Activated CD4-positive, alpha-beta memory T cell treated with anti-CD3 and anti-CD28 coated beads for 36 hours (primary cell): ENCODE measurements at regions of chr1 and their contacts with region 1.

Region 1: DNA sequence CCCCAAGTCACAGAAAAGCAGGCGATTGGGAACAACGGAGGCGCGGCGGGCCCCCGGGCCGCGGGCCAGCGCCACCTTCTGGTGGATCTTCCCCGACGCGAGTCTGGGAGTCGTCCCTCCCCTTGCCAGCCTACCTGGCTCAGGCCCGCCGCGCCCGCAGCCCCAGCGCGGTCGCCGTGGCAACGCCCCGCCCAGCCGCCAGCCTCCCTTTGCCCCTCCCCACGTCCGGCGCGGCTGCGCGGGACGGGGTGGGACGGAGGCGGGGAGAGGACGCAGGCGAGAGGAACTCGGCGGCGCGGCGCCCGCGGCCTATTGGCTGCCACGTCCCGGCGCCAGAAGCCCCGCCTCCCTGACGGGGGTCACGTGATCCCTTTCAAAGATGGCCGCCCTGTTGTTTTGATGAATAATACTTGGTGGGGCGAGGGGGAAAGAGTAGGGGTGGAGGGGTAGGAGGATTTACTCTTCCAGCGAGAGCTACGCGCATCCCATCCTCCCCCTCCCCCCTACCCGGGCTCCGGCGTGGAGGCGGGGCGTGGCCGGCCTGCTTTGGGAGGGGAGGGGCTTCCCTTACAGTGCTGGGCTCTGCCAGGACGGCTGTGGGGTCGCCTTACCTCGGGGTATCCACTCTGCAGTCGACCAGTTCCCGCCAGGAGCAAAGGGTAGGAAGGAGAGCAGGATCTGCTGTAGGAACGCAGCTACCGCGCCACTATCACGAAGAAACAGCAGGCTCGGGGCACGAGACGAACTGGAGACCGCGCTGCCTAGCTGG is at the start of gene UBE4B:
- DNase-seq: peak; percentile 99
- H3K4me3 Mint-ChIP-seq: peak within 1 kb of the TSS; percentile 95
- H3K27ac Mint-ChIP-seq: peak within 1 kb of the TSS; percentile 89
- H3K4me1 Mint-ChIP-seq: peaks cover 23% of the 10 kb centered on the region
- H3K27me3 Mint-ChIP-seq: no peaks in the 10 kb centered on the region
- total RNA-seq, gene UBE4B: 24.3 to 25.3 TPM

Region 2: DNA sequence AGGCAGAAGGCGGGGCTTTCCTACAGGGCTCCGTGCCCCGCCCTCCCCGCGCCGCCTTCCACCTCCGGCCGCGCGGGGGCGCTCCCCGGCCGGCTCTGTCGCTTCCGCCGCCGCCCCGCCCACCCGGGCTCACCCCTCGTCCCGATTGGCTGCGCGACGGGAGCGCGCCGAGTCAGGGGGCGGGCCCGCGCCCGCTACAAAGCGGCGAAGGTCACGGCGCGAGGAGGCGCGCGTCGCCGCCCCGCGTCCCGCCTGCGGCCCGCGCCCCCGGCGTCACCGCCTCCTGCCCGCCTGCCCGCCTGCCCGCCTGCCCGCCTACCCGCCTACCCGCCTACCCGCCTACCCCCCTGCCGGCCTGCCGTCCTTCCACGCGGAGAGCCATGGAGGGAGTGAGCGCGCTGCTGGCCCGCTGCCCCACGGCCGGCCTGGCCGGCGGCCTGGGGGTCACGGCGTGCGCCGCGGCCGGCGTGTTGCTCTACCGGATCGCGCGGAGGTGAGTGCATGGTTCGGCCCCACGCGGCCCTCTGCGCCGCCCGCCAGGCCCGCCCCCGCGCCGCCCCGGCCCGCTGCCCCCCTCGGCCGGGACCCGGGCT is 444.1 kb before region 1 on chr1 and contains the start of gene TMEM201:
- CTCF ChIA-PET with region 1: no interaction called
- POLR2A ChIA-PET with region 1: no interaction called
- intact Hi-C with region 1: loop called (anchors 1 kb)
- DNase-seq: peak; percentile 95
- H3K4me3 Mint-ChIP-seq: peak within 1 kb of the TSS; percentile 82
- H3K27ac Mint-ChIP-seq: peak within 1 kb of the TSS; percentile 35
- H3K4me1 Mint-ChIP-seq: peaks cover 31% of the 10 kb centered on the region
- H3K27me3 Mint-ChIP-seq: no peaks in the 10 kb centered on the region
- total RNA-seq, gene TMEM201: 12.2 to 14.0 TPM

Region 3: DNA sequence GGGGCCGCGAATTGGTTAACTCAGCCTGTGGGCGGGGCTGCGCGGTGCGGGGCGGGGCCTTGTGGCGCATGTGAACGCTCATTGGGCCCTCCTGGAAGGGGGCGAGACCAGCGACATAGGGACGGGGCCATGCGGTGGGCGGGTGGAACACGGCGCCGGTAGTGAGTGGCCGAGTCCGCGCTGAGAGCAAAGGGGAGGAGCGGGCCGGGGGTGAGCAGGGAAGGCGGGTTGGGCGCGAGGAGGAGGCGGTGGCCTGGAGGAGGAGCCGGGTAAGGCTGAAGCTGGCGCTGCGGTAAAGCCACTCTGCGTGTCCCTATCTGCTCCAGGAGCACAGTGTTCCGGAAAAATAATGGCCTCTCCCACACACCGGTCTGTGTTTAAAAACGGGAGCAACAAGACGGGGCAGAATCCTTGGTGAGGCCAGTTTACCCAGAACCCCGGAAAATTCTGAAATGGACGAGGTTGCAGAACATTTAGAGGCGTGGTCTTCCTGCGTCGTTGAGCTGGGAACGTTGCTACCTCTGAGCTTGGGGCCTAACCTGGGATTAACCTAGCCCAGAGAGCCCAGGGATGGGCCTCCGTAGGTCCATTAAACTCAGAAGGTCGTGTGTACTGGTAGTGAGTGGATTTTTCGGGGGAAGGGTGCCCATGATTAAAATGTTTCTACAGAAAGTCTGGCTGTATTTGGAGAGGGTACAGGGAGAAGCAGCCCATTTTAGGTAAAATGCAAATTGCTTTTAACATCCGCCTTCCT is 122.2 kb before region 1 on chr1:
- CTCF ChIA-PET with region 1: interaction called, 3 read pairs
- POLR2A ChIA-PET with region 1: no interaction called
- intact Hi-C with region 1: loop called (anchors 1 kb)
- DNase-seq: peak; percentile 100
- H3K4me3 Mint-ChIP-seq: peak overlapping the region; percentile 94
- H3K27ac Mint-ChIP-seq: peak overlapping the region; percentile 94
- H3K4me1 Mint-ChIP-seq: peaks cover 28% of the 10 kb centered on the region
- H3K27me3 Mint-ChIP-seq: no peaks in the 10 kb centered on the region

Region 4: DNA sequence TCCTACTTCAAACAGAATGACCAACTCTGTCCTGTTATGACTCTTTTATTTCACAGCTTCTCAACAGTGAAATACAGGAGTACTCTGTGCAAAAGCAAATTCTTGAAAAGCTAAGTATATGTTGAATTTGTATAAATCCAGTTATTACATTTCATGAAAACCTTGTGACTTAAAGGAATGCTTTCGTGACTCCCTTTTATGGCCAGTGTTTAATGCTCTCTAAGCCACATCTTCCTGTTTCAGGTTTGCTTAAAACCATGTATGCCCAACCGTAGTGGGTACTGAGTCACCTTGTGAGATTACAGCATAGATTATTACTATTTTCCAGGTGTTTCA is 137.4 kb after region 1 on chr1:
- CTCF ChIA-PET with region 1: no interaction called
- POLR2A ChIA-PET with region 1: no interaction called
- intact Hi-C with region 1: loop called (anchors 2 kb)
- DNase-seq: peak; percentile 35
- H3K4me3 Mint-ChIP-seq: no peak overlapping the region
- H3K27ac Mint-ChIP-seq: peak overlapping the region; percentile 83
- H3K4me1 Mint-ChIP-seq: peaks cover 40% of the 10 kb centered on the region
- H3K27me3 Mint-ChIP-seq: no peaks in the 10 kb centered on the region

Region 5: GRCh38 chr1:10472220-10473144 is 439.7 kb after region 1 on chr1 and contains the start of gene DFFA:
- CTCF ChIA-PET with region 1: no interaction called
- POLR2A ChIA-PET with region 1: no interaction called
- intact Hi-C with region 1: loop called (anchors 1 kb)
- DNase-seq: peak; percentile 96
- H3K4me3 Mint-ChIP-seq: peak within 1 kb of the TSS; percentile 92
- H3K27ac Mint-ChIP-seq: peak within 1 kb of the TSS; percentile 82
- H3K4me1 Mint-ChIP-seq: peaks cover 31% of the 10 kb centered on the region
- H3K27me3 Mint-ChIP-seq: no peaks in the 10 kb centered on the region
- total RNA-seq, gene DFFA: 32.0 to 32.8 TPM